Transverse colon (tissue), 4 donors: ENCODE measurements at regions of chr16 and their contacts with region 1.

Region 1: DNA sequence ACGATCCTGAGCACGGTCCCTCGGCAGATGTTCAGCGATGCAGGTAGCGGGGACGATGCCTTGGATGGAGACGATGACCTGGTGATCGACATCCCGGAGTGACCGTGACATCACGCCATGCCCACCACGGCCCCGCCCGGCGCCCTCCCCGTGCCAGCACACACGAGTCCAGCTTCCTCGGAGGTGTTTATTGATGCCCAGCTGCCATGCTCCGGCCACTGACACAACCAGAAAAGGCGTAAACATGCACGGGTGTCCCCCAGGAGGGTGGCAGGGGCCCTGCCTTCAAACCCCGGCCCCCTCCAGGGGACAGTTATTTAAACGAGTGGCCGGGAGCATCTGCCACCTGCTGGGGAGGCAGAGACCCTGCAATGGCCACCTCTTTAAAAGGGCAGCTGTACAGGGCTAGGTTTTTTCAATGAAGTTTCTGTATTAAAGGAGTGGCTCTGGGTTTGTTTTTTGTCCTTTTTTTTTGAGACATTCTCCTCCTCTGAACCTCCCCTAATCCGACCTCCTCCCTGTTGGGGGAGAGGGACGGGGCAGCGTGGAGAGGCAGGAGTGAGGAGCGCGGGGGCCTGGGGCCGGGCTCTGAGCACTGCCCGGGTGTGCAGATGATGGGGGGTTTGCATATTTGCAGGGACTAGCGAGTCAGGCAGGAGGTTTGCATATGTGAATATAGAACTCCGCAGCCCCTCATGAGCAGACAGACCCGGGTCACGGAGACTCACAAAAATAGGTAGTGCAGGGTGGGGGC is 5.3 kb downstream of the DOC2A start:
- DNase-seq: peak; percentile 37
- H3K4me3 ChIP-seq: no peak overlapping the region
- H3K27ac ChIP-seq: no peak overlapping the region
- H3K4me1 ChIP-seq: peaks cover 3 to 14% (median 11%) of the 10 kb centered on the region in 4 donors
- H3K27me3 ChIP-seq: peaks cover 20% of the 10 kb centered on the region
- CTCF ChIP-seq: peak; percentile 83 to 87 (median 85)
- EP300 ChIP-seq: no peak
- POLR2A ChIP-seq: no peak

Region 2: DNA sequence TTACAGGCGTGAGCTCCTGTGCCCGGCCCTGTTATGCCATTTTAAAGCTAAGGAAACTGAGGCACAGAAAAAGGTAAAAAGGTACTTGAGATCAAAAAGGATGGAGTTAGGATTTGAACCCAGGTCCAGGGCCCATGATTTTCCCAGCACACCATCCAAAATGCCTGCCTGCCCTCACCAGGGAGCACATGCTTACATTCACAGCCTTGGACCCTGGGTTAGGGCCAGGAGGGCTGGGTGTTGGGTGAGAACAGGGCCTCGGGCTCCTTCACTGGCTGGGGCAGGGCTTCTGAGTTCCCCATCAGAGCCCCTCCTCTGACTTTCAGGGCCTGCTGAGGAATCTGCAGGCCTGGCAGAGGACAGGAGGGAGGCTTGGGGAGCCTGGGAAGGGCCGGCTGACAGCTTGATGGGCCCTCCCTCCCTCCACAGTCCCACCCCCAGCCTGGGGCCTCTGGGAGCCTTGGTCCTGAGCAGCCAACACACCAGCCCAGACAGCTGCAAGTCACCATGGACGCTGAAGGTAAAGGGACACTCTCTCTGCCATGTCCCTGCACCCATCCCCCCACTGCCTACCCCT is 326.7 kb before region 1 on chr16 and contains the start of gene QPRT:
- in situ Hi-C with region 1: loop called in 1 of 4 experiments (anchors 25 kb)
- intact Hi-C with region 1: no loop called
- DNase-seq: peak; percentile 71
- H3K4me3 ChIP-seq: peak within 1 kb of the TSS; percentile 10 to 50 (median 30)
- H3K27ac ChIP-seq: peak within 1 kb of the TSS; percentile 83 to 85 (median 83)
- H3K4me1 ChIP-seq: peaks cover 6 to 42% (median 24%) of the 10 kb centered on the region in 4 donors
- H3K27me3 ChIP-seq: no peaks in the 10 kb centered on the region
- CTCF ChIP-seq: no peak
- EP300 ChIP-seq: no peak
- POLR2A ChIP-seq: no peak
- total RNA-seq, gene QPRT: 14.3 to 65.8 (median 26.3) TPM

Region 3: DNA sequence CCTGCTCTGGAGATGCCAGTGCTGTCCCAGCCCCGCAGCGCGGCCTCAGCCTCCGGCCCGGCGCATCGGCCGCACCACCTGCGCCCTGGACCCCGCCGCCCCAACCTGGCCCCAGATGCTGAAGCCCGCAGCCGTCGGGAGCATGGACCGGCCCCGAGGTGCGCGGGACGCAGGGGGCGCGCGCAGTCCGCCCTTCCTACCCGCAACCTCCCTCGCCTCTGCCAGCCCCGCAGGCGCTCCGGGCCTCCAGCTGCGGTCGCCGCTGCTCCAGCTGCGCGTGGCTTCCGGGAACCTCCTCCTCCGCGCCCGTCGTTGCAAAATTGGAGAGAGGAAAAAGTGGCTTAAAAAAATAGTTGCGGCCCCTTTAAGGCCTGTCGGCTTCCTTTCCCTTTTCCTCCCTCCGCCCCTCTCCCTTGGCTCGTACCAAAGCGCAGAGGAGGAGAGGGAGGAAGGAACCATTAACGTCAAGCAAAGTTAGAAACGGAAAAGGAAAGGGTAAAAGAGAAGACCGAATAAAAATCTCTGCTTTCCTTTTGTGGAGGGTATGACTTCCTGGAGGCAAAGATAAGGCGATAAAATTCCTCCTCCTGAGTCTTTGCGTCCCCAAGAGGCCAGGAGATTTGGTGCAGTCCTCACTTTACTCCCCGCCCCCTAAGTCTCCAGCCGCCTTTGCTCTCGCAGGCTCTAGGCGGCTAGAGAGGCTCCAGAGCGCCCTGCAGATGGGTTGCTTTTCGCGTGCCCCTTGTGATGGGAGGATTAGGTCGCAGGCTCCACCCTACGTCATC is 142.4 kb before region 1 on chr16 and contains the start of gene CDIPT:
- in situ Hi-C with region 1: loop called in 2 of 4 experiments (anchors 25 kb)
- intact Hi-C with region 1: no loop called
- DNase-seq: peak; percentile 95
- H3K4me3 ChIP-seq: peak within 1 kb of the TSS; percentile 90 to 95 (median 91)
- H3K27ac ChIP-seq: peak within 1 kb of the TSS; percentile 89 to 96 (median 94)
- H3K4me1 ChIP-seq: peaks cover 10 to 24% (median 18%) of the 10 kb centered on the region in 4 donors
- H3K27me3 ChIP-seq: no peaks in the 10 kb centered on the region
- CTCF ChIP-seq: peak; percentile 42 to 92 (median 47)
- EP300 ChIP-seq: no peak
- POLR2A ChIP-seq: peak; percentile 52
- total RNA-seq, gene CDIPT: 58.5 to 139 (median 94.5) TPM

Region 4: DNA sequence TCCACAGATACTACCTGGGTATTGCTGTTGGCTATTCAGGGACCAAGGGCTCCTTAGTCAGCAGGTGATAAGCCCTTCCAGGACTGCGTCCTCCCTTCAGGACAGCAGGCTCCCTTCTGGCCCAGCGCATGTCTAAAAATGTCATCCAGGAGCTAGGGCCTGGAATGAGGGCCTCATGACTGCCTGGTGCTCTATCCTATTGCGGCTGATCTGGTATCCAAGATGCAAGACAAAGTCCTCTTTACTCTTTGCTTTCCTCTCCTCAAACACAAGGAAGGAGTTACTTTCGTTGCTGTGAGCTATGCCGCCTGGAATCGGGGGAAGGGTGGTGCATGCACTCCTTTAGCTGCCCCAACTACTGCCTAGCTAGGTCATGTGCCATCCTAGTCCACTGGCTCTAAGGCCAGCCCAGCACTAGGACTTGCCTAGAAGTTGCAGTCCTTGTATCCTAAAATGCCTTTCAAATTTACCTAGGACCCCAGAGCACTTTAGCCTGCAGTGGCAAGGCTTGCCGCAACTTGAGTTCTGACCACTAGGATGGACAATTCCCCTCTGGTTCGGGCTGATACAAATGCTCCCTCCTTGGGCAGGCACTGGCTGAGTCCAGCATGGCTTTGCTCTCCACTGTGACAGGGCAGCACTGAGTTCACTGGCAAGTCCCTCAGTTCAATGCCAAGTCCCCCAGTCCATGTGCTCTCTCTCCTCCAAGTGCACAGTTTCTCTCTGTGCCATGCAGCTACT is 53.7 kb before region 1 on chr16:
- in situ Hi-C with region 1: no loop called
- intact Hi-C with region 1: no loop called
- DNase-seq: no peak
- H3K4me3 ChIP-seq: no peak overlapping the region
- H3K27ac ChIP-seq: no peak overlapping the region
- H3K4me1 ChIP-seq: no peaks in the 10 kb centered on the region
- H3K27me3 ChIP-seq: no peaks in the 10 kb centered on the region
- CTCF ChIP-seq: no peak
- EP300 ChIP-seq: no peak
- POLR2A ChIP-seq: no peak

Region 5: GRCh38 chr16:30041846-30042267 is 36.3 kb after region 1 on chr16:
- in situ Hi-C with region 1: no loop called
- intact Hi-C with region 1: no loop called
- DNase-seq: no peak
- H3K4me3 ChIP-seq: no peak overlapping the region
- H3K27ac ChIP-seq: no peak overlapping the region
- H3K4me1 ChIP-seq: no peaks in the 10 kb centered on the region
- H3K27me3 ChIP-seq: peaks cover 34% of the 10 kb centered on the region
- CTCF ChIP-seq: peak in 3 of 5 experiments; percentile 31 to 48 (median 36)
- EP300 ChIP-seq: no peak
- POLR2A ChIP-seq: no peak